Esophagus muscularis mucosa (tissue), 4 donors: ENCODE measurements at regions of chr11 and their contacts with region 1.

Region 1: DNA sequence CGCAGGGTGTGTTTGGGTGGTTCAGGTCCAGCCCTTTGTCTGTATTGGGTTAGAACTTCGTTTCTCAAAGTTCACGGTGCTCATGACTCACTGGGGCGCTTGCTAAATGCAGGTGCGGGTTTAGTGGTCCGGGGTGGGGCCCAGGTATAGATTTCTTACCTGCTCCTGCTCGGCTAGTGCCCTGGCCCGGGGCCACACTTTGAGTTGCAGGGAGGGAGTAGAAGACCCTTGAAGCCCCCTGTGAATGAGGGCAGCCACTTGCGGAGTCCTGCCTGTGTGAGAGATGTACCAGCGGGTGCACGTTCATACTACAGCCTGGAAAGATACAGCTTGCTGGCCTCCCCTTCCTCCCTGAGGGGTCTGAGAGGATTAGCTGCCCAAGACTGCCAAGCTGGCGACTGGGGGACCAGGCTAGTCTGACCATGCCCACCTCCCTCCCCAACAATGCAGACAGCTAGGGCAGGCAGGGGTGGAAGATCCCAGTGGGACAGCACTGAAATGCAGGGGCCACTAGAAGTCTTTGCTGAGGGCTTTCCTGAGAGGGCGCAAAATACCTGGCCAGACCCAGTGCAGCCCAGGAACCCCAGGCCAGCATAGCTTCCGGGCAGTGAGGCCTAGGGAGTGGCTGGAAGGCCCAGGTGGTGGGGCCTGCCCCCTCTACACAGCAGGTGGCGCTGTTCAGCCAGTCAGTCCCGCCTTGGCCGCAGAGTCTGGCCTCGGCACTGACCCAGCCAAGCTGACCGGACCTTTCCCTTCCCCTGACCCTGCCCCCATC is 5.1 kb upstream of the MYRF start:
- DNase-seq: no peak
- H3K4me3 ChIP-seq: no peak overlapping the region
- H3K27ac ChIP-seq: no peak overlapping the region
- H3K4me1 ChIP-seq: peaks cover 6 to 18% (median 15%) of the 10 kb centered on the region in 4 donors
- H3K27me3 ChIP-seq: peaks cover 0 to 27% (median 9%) of the 10 kb centered on the region in 4 donors
- CTCF ChIP-seq: peak; percentile 71 to 92 (median 72)
- EP300 ChIP-seq: no peak
- POLR2A ChIP-seq: no peak

Region 2: GRCh38 chr11:62108017-62108750 is 360.8 kb after region 1 on chr11:
- intact Hi-C with region 1: loop called (anchors 5 kb)
- DNase-seq: no peak
- H3K4me3 ChIP-seq: no peak overlapping the region
- H3K27ac ChIP-seq: no peak overlapping the region
- H3K4me1 ChIP-seq: peaks cover 21 to 46% (median 33%) of the 10 kb centered on the region in 4 donors
- H3K27me3 ChIP-seq: no peaks in the 10 kb centered on the region
- CTCF ChIP-seq: peak; percentile 75 to 84 (median 84)
- EP300 ChIP-seq: no peak
- POLR2A ChIP-seq: no peak